ENCODE measurements at regions of chr5 and their contacts with region 1.

Region 1: DNA sequence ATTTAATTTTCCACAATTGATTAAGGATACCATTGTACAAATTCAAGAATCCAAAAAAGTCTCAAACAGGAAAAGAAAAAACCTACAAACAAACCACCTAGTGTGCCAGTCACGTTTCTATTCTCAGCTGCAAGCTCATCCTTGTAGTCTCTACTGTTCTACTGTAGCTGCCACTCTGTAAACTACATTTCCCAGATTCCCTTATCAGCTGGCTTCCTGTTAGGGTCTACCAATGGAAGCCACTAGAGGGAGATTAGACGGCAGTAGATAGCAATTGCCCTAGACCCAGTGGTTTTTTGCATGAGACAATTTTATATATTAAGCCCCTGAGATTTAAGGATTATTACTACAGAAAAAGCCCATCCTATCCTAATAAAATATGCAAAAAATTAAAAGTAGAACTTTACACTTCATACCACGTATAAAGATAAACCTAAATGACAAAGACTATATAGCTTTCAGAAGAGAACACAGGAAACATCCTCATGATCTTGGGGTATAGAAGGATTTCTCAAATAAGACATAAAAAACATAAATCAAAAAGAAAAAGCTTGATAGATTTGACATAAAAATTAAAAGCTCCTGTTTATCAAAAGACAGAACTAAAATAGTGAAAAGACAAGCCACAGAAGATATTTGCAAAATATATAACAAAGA is 37.4 kb downstream of the P4HA2 start:
- DNase-seq: peak; percentile 32
- ATAC-seq: peak; percentile 87
- H3K4me3 Mint-ChIP-seq: no peak overlapping the region
- H3K27ac Mint-ChIP-seq: no peak overlapping the region
- H3K4me1 Mint-ChIP-seq: no peaks in the 10 kb centered on the region
- H3K27me3 Mint-ChIP-seq: peaks cover 12% of the 10 kb centered on the region

Region 2: GRCh38 chr5:131899692-131900091 is 290.6 kb before region 1 on chr5:
- CTCF ChIA-PET with region 1: no interaction called
- POLR2A ChIA-PET with region 1: no interaction called
- DNase-seq: no peak
- ATAC-seq: no peak
- H3K4me3 Mint-ChIP-seq: no peak overlapping the region
- H3K27ac Mint-ChIP-seq: no peak overlapping the region
- H3K4me1 Mint-ChIP-seq: peaks cover 38% of the 10 kb centered on the region
- H3K27me3 Mint-ChIP-seq: peaks cover 15% of the 10 kb centered on the region

Region 3: GRCh38 chr5:132103332-132103951 is 86.8 kb before region 1 on chr5:
- CTCF ChIA-PET with region 1: no interaction called
- POLR2A ChIA-PET with region 1: no interaction called
- DNase-seq: peak; percentile 87
- ATAC-seq: peak; percentile 82
- H3K4me3 Mint-ChIP-seq: peak overlapping the region; percentile 48
- H3K27ac Mint-ChIP-seq: peak overlapping the region; percentile 94
- H3K4me1 Mint-ChIP-seq: peaks cover 91% of the 10 kb centered on the region
- H3K27me3 Mint-ChIP-seq: no peaks in the 10 kb centered on the region

Region 4: GRCh38 chr5:132180134-132180745 is 10.0 kb before region 1 on chr5:
- CTCF ChIA-PET with region 1: interaction called, 44 read pairs
- POLR2A ChIA-PET with region 1: no interaction called
- DNase-seq: peak; percentile 35
- ATAC-seq: peak; percentile 37
- H3K4me3 Mint-ChIP-seq: no peak overlapping the region
- H3K27ac Mint-ChIP-seq: no peak overlapping the region
- H3K4me1 Mint-ChIP-seq: peaks cover 47% of the 10 kb centered on the region
- H3K27me3 Mint-ChIP-seq: no peaks in the 10 kb centered on the region

Region 5: DNA sequence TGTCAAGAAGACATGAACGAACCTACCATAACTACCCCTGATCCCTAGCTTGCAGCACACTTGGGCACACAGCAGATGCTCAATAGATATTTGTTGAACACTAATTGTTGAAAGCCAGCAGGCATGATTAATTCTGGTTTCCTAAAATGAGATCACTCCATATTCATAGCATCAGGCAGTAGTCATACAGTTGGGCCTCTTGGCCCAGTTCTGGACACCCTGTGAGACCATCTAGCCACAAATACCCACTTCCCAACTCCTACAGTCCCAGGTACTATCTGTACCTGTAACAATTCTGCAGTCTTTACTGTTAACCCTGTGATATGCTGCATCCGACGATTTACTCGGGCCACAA is 13.2 kb after region 1 on chr5:
- CTCF ChIA-PET with region 1: interaction called, 14 read pairs
- POLR2A ChIA-PET with region 1: no interaction called
- DNase-seq: no peak
- ATAC-seq: no peak
- H3K4me3 Mint-ChIP-seq: no peak overlapping the region
- H3K27ac Mint-ChIP-seq: no peak overlapping the region
- H3K4me1 Mint-ChIP-seq: no peaks in the 10 kb centered on the region
- H3K27me3 Mint-ChIP-seq: no peaks in the 10 kb centered on the region